ENCODE measurements at regions of chr13 and their contacts with region 1.

Region 1: GRCh38 chr13:109162248-109163053 is 533.0 kb downstream of the MYO16 start:
- DNase-seq: peak; percentile 98
- ATAC-seq: peak; percentile 84
- H3K4me3 ChIP-seq: peak overlapping the region; percentile 62
- H3K27ac ChIP-seq: peak overlapping the region; percentile 86
- H3K4me1 ChIP-seq: peaks cover 29% of the 10 kb centered on the region
- H3K27me3 ChIP-seq: no peaks in the 10 kb centered on the region
- CTCF ChIP-seq: 0 out of 6 replicates have a peak, but pooled peaks of 1 of the 3 experiments have one; percentile 4
- EP300 ChIP-seq: peak; percentile 99
- POLR2A ChIP-seq: no peak
- RAD21 ChIP-seq: 0 out of 2 replicates have a peak, but pooled peaks have one; percentile 15

Region 2: GRCh38 chr13:109093998-109094397 is 68.5 kb before region 1 on chr13:
- CTCF ChIA-PET with region 1: no interaction called
- POLR2A ChIA-PET with region 1: no interaction called
- RAD21 ChIA-PET with region 1: no interaction called
- SMC1A ChIA-PET with region 1: no interaction called
- in situ Hi-C with region 1: no loop called
- intact Hi-C with region 1: no loop called
- DNase-seq: no peak
- ATAC-seq: no peak
- H3K4me3 ChIP-seq: no peak overlapping the region
- H3K27ac ChIP-seq: no peak overlapping the region
- H3K4me1 ChIP-seq: no peaks in the 10 kb centered on the region
- H3K27me3 ChIP-seq: no peaks in the 10 kb centered on the region
- CTCF ChIP-seq: no peak
- EP300 ChIP-seq: no peak
- POLR2A ChIP-seq: no peak
- RAD21 ChIP-seq: no peak

Region 3: DNA sequence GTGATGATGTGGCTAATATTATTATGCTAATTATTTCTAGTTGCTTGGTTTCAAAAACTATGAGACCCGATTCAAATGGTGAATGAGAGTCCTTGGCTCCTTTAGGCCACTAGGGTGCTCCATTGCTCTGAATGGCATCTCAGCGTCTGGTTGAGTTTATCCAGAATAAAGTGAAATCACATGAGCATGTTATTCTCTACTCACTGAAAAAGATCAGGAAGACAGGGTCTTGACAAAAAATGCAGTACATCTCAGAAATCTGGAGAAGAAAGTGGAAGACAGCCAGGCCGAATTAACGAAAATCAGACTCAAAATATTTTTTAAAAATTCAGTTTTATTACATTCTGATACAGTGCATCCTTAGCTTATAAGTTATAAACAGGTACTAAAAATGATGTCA is 16.8 kb before region 1 on chr13:
- CTCF ChIA-PET with region 1: interaction called, 17 read pairs
- POLR2A ChIA-PET with region 1: no interaction called
- RAD21 ChIA-PET with region 1: interaction called, 13 read pairs
- SMC1A ChIA-PET with region 1: interaction called, 55 read pairs
- in situ Hi-C with region 1: no loop called
- intact Hi-C with region 1: no loop called
- DNase-seq: no peak
- ATAC-seq: peak; percentile 98
- H3K4me3 ChIP-seq: no peak overlapping the region
- H3K27ac ChIP-seq: no peak overlapping the region
- H3K4me1 ChIP-seq: no peaks in the 10 kb centered on the region
- H3K27me3 ChIP-seq: no peaks in the 10 kb centered on the region; a peak in 1 of 4 replicates
- CTCF ChIP-seq: peak; percentile 76 to 81 (median 78)
- EP300 ChIP-seq: no peak
- POLR2A ChIP-seq: no peak
- RAD21 ChIP-seq: peak; percentile 95

Region 4: GRCh38 chr13:109233293-109233692 is 70.8 kb after region 1 on chr13:
- CTCF ChIA-PET with region 1: no interaction called
- POLR2A ChIA-PET with region 1: no interaction called
- RAD21 ChIA-PET with region 1: no interaction called
- SMC1A ChIA-PET with region 1: no interaction called
- in situ Hi-C with region 1: no loop called
- intact Hi-C with region 1: loop called (anchors 2 kb)
- DNase-seq: no peak
- ATAC-seq: peak; percentile 90
- H3K4me3 ChIP-seq: no peak overlapping the region
- H3K27ac ChIP-seq: no peak overlapping the region
- H3K4me1 ChIP-seq: no peaks in the 10 kb centered on the region
- H3K27me3 ChIP-seq: no peaks in the 10 kb centered on the region
- CTCF ChIP-seq: no peak
- EP300 ChIP-seq: no peak
- POLR2A ChIP-seq: no peak
- RAD21 ChIP-seq: no peak

Region 5: GRCh38 chr13:109344552-109345157 is 182.2 kb after region 1 on chr13:
- CTCF ChIA-PET with region 1: no interaction called
- POLR2A ChIA-PET with region 1: no interaction called
- RAD21 ChIA-PET with region 1: no interaction called
- SMC1A ChIA-PET with region 1: no interaction called
- in situ Hi-C with region 1: no loop called
- intact Hi-C with region 1: no loop called
- DNase-seq: no peak
- ATAC-seq: no peak
- H3K4me3 ChIP-seq: no peak overlapping the region
- H3K27ac ChIP-seq: no peak overlapping the region
- H3K4me1 ChIP-seq: no peaks in the 10 kb centered on the region
- H3K27me3 ChIP-seq: no peaks in the 10 kb centered on the region
- CTCF ChIP-seq: no peak
- EP300 ChIP-seq: no peak
- POLR2A ChIP-seq: no peak
- RAD21 ChIP-seq: no peak

Region 6: DNA sequence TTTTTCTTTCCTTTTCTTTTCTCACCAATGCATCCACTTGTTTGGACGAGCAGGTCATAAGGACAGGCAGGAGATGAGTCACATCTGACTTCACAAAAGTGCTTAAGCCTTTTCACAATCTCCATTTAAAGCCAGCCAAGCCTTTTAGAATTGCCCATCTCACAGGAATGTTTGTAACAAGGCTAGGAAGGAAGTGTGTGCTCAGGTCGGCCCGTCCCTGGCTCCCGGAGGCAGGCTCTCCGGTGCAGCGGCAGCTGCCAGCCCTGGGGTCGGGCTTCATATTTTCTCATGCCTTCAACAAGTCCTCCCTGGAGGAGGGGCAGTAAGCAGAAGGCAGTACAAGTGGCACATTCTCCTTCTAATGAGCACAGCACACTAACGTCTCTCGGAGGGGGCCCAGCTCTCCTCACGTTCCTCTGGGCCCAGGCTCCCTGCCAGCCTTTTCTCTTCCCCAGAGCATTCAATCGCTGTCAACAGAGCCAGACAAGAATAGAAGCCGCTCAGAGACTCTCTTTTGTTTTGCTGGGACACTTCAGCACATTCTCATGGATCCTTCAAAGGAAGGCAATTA is 964.0 kb after region 1 on chr13:
- CTCF ChIA-PET with region 1: no interaction called
- POLR2A ChIA-PET with region 1: no interaction called
- RAD21 ChIA-PET with region 1: no interaction called
- SMC1A ChIA-PET with region 1: no interaction called
- in situ Hi-C with region 1: loop called (anchors 5 kb)
- intact Hi-C with region 1: loop called (anchors 2 kb)
- DNase-seq: no peak
- ATAC-seq: peak; percentile 1; the same call in 1 of the 3 replicates
- H3K4me3 ChIP-seq: no peak overlapping the region
- H3K27ac ChIP-seq: no peak overlapping the region; the same call in 1 of the 2 replicates
- H3K4me1 ChIP-seq: peaks cover 3% of the 10 kb centered on the region; the same call in 1 of the 2 replicates
- H3K27me3 ChIP-seq: no peaks in the 10 kb centered on the region
- CTCF ChIP-seq: no peak
- EP300 ChIP-seq: no peak
- POLR2A ChIP-seq: no peak
- RAD21 ChIP-seq: no peak

Region 7: GRCh38 chr13:110561344-110562035 is 1399.0 kb after region 1 on chr13 and contains the start of gene RAB20:
- CTCF ChIA-PET with region 1: no interaction called
- POLR2A ChIA-PET with region 1: no interaction called
- RAD21 ChIA-PET with region 1: no interaction called
- SMC1A ChIA-PET with region 1: no interaction called
- in situ Hi-C with region 1: no loop called
- intact Hi-C with region 1: loop called (anchors 10 kb)
- DNase-seq: no peak
- ATAC-seq: peak; percentile 75
- H3K4me3 ChIP-seq: peak within 1 kb of the TSS; percentile 91
- H3K27ac ChIP-seq: peak within 1 kb of the TSS; percentile 71
- H3K4me1 ChIP-seq: peaks cover 2% of the 10 kb centered on the region
- H3K27me3 ChIP-seq: no peaks in the 10 kb centered on the region
- CTCF ChIP-seq: no peak
- EP300 ChIP-seq: no peak
- POLR2A ChIP-seq: peak; percentile 61
- RAD21 ChIP-seq: peak; percentile 7; the same call in 1 of the 2 replicates
- polyA plus RNA-seq, gene RAB20: 0.48 to 2.1 TPM

Measured in GM12878 (cell line).